Endothelial cell of umbilical vein (primary cell): ENCODE measurements at regions of chrX and their contacts with region 1.

Region 1: GRCh38 chrX:51802917-51803688 is 59.9 kb downstream of the GSPT2 start:
- DNase-seq: peak; percentile 9
- H3K4me3 ChIP-seq: peak overlapping the region; percentile 32 to 78 (median 67)
- H3K27ac ChIP-seq: no peak overlapping the region
- H3K4me1 ChIP-seq: peaks cover 3% of the 10 kb centered on the region
- H3K27me3 ChIP-seq: no peaks in the 10 kb centered on the region
- CTCF ChIP-seq: no peak
- POLR2A ChIP-seq: no peak

Region 2: GRCh38 chrX:51608126-51608525 is 195.0 kb before region 1 on chrX:
- CTCF ChIA-PET with region 1: no interaction called
- POLR2A ChIA-PET with region 1: interaction called, 4 read pairs
- dilution Hi-C with region 1: no loop called
- intact Hi-C with region 1: loop called (anchors 5 kb)
- DNase-seq: no peak
- H3K4me3 ChIP-seq: no peak overlapping the region
- H3K27ac ChIP-seq: no peak overlapping the region
- H3K4me1 ChIP-seq: no peaks in the 10 kb centered on the region
- H3K27me3 ChIP-seq: no peaks in the 10 kb centered on the region
- CTCF ChIP-seq: no peak
- POLR2A ChIP-seq: no peak